ENCODE measurements at regions of chr7 and their contacts with region 1.

Region 1: DNA sequence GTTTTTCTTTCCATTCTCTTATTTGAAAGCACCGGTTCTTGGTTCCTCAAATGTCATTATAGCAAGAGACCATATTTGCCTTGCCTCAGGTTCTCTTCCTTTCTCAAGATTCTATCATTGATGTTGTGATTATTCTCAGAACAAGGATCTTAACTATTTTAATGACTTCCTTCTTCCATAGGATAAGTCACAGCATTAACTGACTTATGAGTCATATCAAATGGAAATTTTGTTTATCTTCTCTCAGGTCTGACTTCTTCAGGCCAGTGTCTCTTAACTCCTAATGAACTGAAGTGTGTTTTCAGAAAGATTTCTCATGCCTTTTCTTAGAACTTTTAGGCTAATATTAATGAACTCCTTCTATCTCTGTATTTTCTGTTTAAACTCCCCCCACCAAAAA is 794.6 kb upstream of the LRRN3 start:
- DNase-seq: no peak
- H3K4me3 ChIP-seq: no peak overlapping the region
- H3K27ac ChIP-seq: no peak overlapping the region
- H3K4me1 ChIP-seq: no peaks in the 10 kb centered on the region
- H3K27me3 ChIP-seq: no peaks in the 10 kb centered on the region
- CTCF ChIP-seq: no peak
- EP300 ChIP-seq: no peak
- POLR2A ChIP-seq: no peak

Region 2: GRCh38 chr7:110253093-110253492 is 43.2 kb before region 1 on chr7:
- intact Hi-C with region 1: no loop called
- DNase-seq: no peak
- H3K4me3 ChIP-seq: no peak overlapping the region
- H3K27ac ChIP-seq: no peak overlapping the region
- H3K4me1 ChIP-seq: no peaks in the 10 kb centered on the region
- H3K27me3 ChIP-seq: no peaks in the 10 kb centered on the region
- CTCF ChIP-seq: no peak
- EP300 ChIP-seq: no peak
- POLR2A ChIP-seq: no peak

Region 3: GRCh38 chr7:110358028-110358427 is 61.7 kb after region 1 on chr7:
- intact Hi-C with region 1: loop called in 1 of 4 experiments (anchors 5 kb)
- DNase-seq: no peak
- H3K4me3 ChIP-seq: no peak overlapping the region
- H3K27ac ChIP-seq: no peak overlapping the region
- H3K4me1 ChIP-seq: no peaks in the 10 kb centered on the region
- H3K27me3 ChIP-seq: no peaks in the 10 kb centered on the region
- CTCF ChIP-seq: no peak
- EP300 ChIP-seq: no peak
- POLR2A ChIP-seq: no peak